ENCODE measurements at regions of chr11 and their contacts with region 1.

Region 1: DNA sequence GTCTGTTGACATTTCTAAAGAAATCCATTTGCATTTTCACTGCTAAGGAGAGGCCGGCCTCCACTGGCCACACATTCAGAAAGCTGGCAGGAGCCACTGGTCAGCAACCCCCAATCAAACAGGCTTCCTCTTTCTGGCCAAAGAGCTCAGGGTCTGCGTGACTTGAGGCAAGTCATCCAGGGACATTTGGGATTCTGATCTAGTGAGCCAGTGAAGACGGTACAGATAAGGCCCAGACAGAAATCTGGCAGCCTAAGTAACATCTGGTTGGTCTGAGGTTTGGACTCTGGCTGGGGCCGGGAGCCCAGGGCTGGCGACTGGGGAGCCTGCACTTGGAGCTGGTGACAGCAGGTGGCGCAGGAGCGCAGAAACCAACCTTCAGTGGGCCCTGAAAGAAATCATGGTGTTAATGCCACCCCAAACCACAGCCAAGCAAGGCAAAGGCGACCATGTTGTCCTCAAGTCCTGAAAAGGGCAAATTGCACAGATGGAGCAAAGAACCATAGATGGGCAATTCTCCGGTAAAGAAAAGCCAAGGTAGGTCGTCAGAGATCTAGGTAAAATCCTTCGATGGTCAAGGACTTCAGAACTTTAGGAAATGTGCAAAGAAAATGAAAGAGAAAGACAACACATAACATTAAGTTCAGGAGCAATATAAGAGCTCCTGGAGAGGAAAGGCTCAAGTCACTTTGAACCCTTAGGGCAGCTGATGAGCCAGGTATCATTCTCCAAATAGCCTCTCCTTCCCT is 99.4 kb upstream of the BLID start:
- DNase-seq: peak in 3 of 14 experiments; percentile 5 to 35 (median 23)
- ATAC-seq: no peak
- H3K4me3 ChIP-seq: no peak overlapping the region
- H3K4me3 Mint-ChIP-seq: no peak overlapping the region
- H3K27ac ChIP-seq: no peak overlapping the region
- H3K27ac Mint-ChIP-seq: no peak overlapping the region
- H3K4me1 ChIP-seq: no peaks in the 10 kb centered on the region
- H3K4me1 Mint-ChIP-seq: no peaks in the 10 kb centered on the region
- H3K27me3 ChIP-seq: no peaks in the 10 kb centered on the region
- H3K27me3 Mint-ChIP-seq: peaks cover 24% of the 10 kb centered on the region
- CTCF ChIP-seq: peak; percentile 21

Region 2: DNA sequence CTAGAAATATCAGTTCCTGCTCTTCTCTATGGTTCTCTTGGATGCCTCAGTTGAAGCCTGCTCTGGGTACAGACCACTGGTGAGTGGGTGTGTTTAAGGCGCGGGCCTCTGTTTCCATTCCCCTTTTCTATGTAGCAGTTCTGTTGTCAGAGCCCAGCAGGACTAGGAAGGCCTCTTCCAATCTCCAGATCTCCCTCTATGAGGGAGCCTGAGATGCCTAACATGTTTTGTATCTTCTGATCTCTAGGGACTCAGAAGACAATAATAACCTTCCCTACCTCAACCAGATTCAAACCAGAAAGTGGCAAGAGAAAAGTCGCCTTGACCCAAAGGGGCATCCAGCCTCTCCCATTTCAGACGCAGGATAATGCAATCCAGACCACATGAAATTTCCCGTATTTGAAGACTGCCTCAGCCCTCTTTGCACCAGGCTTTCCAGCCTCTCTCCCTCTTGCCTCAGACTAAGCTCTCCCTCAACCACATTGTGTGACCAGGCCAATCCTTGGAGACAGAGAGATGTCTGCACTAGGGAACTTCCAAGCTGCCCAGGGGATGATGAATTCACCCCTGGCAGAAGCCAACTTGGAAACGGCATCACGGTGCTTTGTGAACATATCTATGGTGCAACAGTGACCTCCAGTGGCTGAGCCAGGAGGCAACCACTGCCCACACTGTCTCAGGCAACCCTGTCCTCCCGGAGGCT is 290.0 kb after region 1 on chr11:
- CTCF ChIA-PET with region 1: no interaction called
- POLR2A ChIA-PET with region 1: no interaction called
- intact Hi-C with region 1: loop called in 1 of 2 experiments (anchors 5 kb)
- DNase-seq: peak; percentile 2 to 60 (median 16)
- ATAC-seq: peak; percentile 43
- H3K4me3 ChIP-seq: no peak overlapping the region
- H3K4me3 Mint-ChIP-seq: no peak overlapping the region
- H3K27ac ChIP-seq: no peak overlapping the region
- H3K27ac Mint-ChIP-seq: no peak overlapping the region
- H3K4me1 ChIP-seq: no peaks in the 10 kb centered on the region
- H3K4me1 Mint-ChIP-seq: no peaks in the 10 kb centered on the region
- H3K27me3 ChIP-seq: peaks cover 13 to 27% of the 10 kb centered on the region in 2 experiments
- H3K27me3 Mint-ChIP-seq: peaks cover 65% of the 10 kb centered on the region
- CTCF ChIP-seq: peak; percentile 38